ENCODE measurements at regions of chr2 and their contacts with region 1.

Region 1: GRCh38 chr2:233061591-233062450 is 1.7 kb downstream of the INPP5D start:
- DNase-seq: peak; percentile 74
- H3K4me3 Mint-ChIP-seq: peak overlapping the region; percentile 98
- H3K27ac Mint-ChIP-seq: peak overlapping the region; percentile 99
- H3K4me1 Mint-ChIP-seq: peaks cover 43% of the 10 kb centered on the region
- H3K27me3 Mint-ChIP-seq: no peaks in the 10 kb centered on the region

Region 2: GRCh38 chr2:232854082-232854481 is 207.7 kb before region 1 on chr2:
- CTCF ChIA-PET with region 1: interaction called, 4 read pairs
- POLR2A ChIA-PET with region 1: no interaction called
- intact Hi-C with region 1: loop called (anchors 5 kb)
- DNase-seq: no peak
- H3K4me3 Mint-ChIP-seq: no peak overlapping the region
- H3K27ac Mint-ChIP-seq: no peak overlapping the region
- H3K4me1 Mint-ChIP-seq: peaks cover 4% of the 10 kb centered on the region
- H3K27me3 Mint-ChIP-seq: no peaks in the 10 kb centered on the region

Region 3: DNA sequence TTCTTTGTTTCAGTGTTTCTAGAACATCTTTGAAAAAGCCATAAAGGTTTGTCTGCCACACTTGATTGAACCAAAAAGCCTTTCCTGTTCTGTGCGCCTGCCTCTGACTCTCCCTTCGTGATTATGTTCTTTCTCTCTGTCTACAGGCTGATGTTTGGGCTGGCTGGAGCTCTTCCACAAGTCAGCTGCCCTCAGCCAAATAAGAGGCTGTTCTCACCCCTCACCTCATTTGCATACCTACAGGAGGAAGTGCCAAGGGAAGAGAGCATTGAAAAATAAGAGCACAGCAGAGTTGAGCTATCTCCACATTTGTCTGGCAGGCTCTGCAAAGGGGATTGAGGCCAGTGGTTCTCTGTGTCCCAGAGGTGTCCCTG is 14.1 kb after region 1 on chr2:
- CTCF ChIA-PET with region 1: interaction called, 66 read pairs
- POLR2A ChIA-PET with region 1: interaction called, 145 read pairs
- intact Hi-C with region 1: loop called (anchors 1 kb)
- DNase-seq: peak; percentile 44
- H3K4me3 Mint-ChIP-seq: no peak overlapping the region
- H3K27ac Mint-ChIP-seq: no peak overlapping the region
- H3K4me1 Mint-ChIP-seq: peaks cover 40% of the 10 kb centered on the region
- H3K27me3 Mint-ChIP-seq: no peaks in the 10 kb centered on the region

Region 4: DNA sequence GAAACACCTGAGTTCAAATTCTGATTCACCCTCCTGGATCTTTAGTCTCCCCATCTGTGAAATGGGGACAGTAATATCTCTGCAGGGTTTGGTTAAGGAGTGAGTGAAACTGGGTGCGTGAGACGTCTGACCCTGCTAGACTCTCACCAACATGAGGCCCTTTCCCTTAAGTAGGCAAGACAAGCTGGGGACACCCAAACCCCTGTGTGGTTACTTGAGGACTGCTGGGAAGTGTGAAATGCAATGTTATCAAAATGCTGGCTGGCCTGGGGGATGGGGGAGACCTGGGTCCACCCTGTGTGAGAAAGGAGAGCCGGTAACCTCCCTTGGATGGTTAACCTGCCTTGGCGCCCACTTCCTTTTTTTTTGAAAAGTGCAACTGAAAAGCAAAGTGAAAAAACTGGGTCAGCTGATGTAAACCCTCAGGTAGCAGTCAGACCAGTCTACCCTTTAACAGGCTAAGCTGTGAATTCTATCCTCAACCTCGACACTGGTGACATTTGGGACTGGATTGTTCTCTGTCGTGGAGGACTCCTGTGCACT is 80.6 kb after region 1 on chr2:
- CTCF ChIA-PET with region 1: interaction called, 3 read pairs
- POLR2A ChIA-PET with region 1: interaction called, 3 read pairs
- intact Hi-C with region 1: loop called (anchors 1 kb)
- DNase-seq: peak; percentile 64
- H3K4me3 Mint-ChIP-seq: no peak overlapping the region
- H3K27ac Mint-ChIP-seq: peak overlapping the region; percentile 67
- H3K4me1 Mint-ChIP-seq: peaks cover 31% of the 10 kb centered on the region
- H3K27me3 Mint-ChIP-seq: no peaks in the 10 kb centered on the region

Measured in activated CD4-positive, alpha-beta memory T cell treated with anti-CD3 and anti-CD28 coated beads for 36 hours (primary cell).